ENCODE measurements at regions of chr18 and their contacts with region 1.

Region 1: DNA sequence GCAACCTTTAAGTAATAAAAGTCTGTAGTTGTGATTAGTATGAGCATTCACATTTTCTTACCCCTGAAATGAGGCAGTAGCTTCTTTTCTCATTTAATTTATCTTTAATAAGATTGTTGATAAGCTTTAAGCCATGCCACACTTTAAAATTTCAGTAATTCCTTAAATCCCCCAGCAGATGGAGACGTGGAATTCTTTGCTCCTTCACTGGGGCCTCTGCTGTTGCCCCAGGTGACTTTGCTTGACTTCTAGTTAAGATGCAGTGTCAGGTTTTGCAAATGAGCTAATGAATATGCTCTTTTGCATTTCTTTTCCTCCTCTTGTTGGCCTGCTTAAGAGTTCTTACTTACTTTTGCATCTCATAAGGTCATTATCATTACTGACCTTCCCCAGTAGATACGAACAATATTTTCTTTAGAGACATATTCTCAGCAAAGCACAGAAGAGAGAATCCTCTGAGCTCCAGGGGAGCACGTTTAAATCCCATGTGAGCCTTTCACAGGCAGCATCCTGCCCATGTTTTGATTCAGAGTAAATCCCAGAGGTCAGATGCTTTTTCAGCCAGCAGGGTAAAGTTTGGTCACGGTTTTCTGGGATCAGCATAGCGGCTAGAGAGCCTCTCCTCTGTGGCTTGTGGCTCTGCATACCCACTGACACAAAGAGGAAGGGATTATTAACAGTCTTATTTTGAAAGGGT is 222.9 kb downstream of the PTPRM start:
- DNase-seq: peak in 1 of 2 experiments; percentile 29
- H3K4me3 ChIP-seq: peak overlapping the region in 1 of 4 experiments; percentile 25; a peak in 1 of 8 replicates
- H3K27ac ChIP-seq: no peak overlapping the region; the same call in 1 of the 2 replicates
- H3K4me1 ChIP-seq: peaks cover 0 to 3% (median 0%) of the 10 kb centered on the region in 4 experiments; a peak in 2 of 7 replicates
- H3K27me3 ChIP-seq: no peaks in the 10 kb centered on the region
- CTCF ChIP-seq: peak; percentile 14 to 65 (median 49)
- EP300 ChIP-seq: no peak
- POLR2A ChIP-seq: no peak
- RAD21 ChIP-seq: peak; percentile 71 to 79

Region 2: GRCh38 chr18:7778181-7778580 is 11.8 kb before region 1 on chr18:
- CTCF ChIA-PET with region 1: interaction called, 36 read pairs
- POLR2A ChIA-PET with region 1: no interaction called
- DNase-seq: no peak
- H3K4me3 ChIP-seq: no peak overlapping the region
- H3K27ac ChIP-seq: no peak overlapping the region
- H3K4me1 ChIP-seq: no peaks in the 10 kb centered on the region
- H3K27me3 ChIP-seq: no peaks in the 10 kb centered on the region
- CTCF ChIP-seq: no peak
- EP300 ChIP-seq: no peak
- POLR2A ChIP-seq: no peak
- RAD21 ChIP-seq: no peak

Region 3: GRCh38 chr18:7805880-7806279 is 15.9 kb after region 1 on chr18:
- CTCF ChIA-PET with region 1: interaction called, 31 read pairs
- POLR2A ChIA-PET with region 1: interaction called, 3 read pairs
- DNase-seq: no peak
- H3K4me3 ChIP-seq: no peak overlapping the region
- H3K27ac ChIP-seq: no peak overlapping the region
- H3K4me1 ChIP-seq: peaks cover 0 to 3% (median 2%) of the 10 kb centered on the region in 4 experiments; a peak in 2 of 7 replicates
- H3K27me3 ChIP-seq: no peaks in the 10 kb centered on the region
- CTCF ChIP-seq: peak in 1 of 3 experiments; percentile 2; a peak in 1 of 4 replicates
- EP300 ChIP-seq: no peak
- POLR2A ChIP-seq: no peak
- RAD21 ChIP-seq: no peak; a peak in 1 of 4 replicates

Region 4: GRCh38 chr18:7824970-7825369 is 35.0 kb after region 1 on chr18:
- CTCF ChIA-PET with region 1: interaction called, 11 read pairs
- POLR2A ChIA-PET with region 1: no interaction called
- DNase-seq: no peak
- H3K4me3 ChIP-seq: no peak overlapping the region
- H3K27ac ChIP-seq: no peak overlapping the region
- H3K4me1 ChIP-seq: peaks cover 0 to 11% (median 3%) of the 10 kb centered on the region in 4 experiments; a peak in 3 of 7 replicates
- H3K27me3 ChIP-seq: no peaks in the 10 kb centered on the region
- CTCF ChIP-seq: no peak
- EP300 ChIP-seq: no peak
- POLR2A ChIP-seq: no peak
- RAD21 ChIP-seq: no peak

Region 5: GRCh38 chr18:7926526-7926925 is 136.5 kb after region 1 on chr18:
- CTCF ChIA-PET with region 1: interaction called, 12 read pairs
- POLR2A ChIA-PET with region 1: no interaction called
- DNase-seq: no peak
- H3K4me3 ChIP-seq: no peak overlapping the region
- H3K27ac ChIP-seq: no peak overlapping the region
- H3K4me1 ChIP-seq: no peaks in the 10 kb centered on the region
- H3K27me3 ChIP-seq: no peaks in the 10 kb centered on the region
- CTCF ChIP-seq: peak in 2 of 3 experiments; percentile 29 to 55; a peak in 2 of 4 replicates
- EP300 ChIP-seq: no peak
- POLR2A ChIP-seq: no peak
- RAD21 ChIP-seq: peak; percentile 45 to 55